Esophagus squamous epithelium (tissue), 5 donors: ENCODE measurements at regions of chr13 and their contacts with region 1.

Region 1: DNA sequence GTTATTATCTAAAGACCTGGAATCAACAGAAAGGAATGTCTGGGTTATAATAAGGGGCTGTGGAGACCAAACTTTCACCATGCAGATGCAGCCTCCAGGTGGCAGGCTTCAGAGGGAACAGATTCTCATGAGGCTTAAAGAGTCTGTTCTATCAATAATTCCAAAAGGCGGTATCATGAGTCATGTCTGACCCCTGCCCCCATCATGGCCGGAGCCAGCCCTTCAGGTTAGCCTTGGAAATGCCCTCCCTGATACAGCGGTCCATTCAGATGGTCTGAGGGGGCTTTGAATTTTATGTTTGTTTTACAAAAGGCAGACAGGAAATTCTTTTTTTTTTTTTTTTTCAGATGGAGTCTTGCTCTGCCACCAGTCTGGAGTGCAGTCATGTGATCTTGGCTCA is 21.7 kb upstream of the LAMP1 start:
- DNase-seq: no peak
- H3K4me3 ChIP-seq: no peak overlapping the region
- H3K27ac ChIP-seq: no peak overlapping the region
- H3K4me1 ChIP-seq: peaks cover 0 to 21% (median 3%) of the 10 kb centered on the region in 3 donors
- H3K27me3 ChIP-seq: no peaks in the 10 kb centered on the region
- CTCF ChIP-seq: peak in 5 of 6 experiments; percentile 31 to 58 (median 53)
- POLR2A ChIP-seq: no peak

Region 2: DNA sequence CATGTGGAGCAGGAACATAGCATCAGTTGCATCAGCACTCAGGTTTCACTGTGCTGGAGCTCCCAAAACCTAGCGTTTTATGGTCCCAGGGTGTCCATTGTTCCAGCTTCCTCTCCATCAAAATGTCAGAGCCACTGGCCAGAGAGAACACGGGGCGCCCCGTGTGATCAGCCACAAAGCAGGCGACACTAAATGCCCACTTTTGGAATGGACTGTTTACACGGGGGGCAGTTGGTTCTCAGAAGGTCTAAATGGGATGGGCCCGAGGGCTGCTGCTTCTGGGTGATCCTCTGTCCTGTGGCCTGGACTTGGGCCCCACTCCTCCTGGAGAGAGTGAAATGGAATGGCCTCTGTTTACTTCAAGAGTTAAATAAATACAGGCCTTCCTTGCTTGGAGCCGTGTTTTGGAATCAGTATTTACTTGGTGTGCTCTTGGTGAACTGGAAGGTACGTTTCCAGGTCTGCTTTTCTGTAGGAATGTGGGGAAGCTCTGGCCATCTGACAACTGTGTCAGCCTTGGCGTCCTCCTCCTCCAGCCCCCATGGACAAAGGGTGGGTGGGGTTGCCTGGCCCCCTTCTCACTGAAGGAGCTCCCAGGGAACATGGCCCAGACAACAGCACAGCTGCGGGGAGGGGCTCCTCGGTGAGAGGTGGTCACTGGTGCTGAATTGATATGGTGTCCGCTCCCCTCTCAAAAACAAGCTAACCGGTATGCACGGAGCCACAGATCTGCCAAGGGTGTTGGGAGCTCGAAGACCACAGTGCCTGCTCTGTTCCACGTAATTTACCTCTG is 322.4 kb before region 1 on chr13:
- intact Hi-C with region 1: no loop called
- DNase-seq: no peak
- H3K4me3 ChIP-seq: no peak overlapping the region
- H3K27ac ChIP-seq: no peak overlapping the region
- H3K4me1 ChIP-seq: no peaks in the 10 kb centered on the region
- H3K27me3 ChIP-seq: peaks cover 0 to 39% (median 0%) of the 10 kb centered on the region in 4 donors
- CTCF ChIP-seq: no peak
- POLR2A ChIP-seq: no peak

Region 3: DNA sequence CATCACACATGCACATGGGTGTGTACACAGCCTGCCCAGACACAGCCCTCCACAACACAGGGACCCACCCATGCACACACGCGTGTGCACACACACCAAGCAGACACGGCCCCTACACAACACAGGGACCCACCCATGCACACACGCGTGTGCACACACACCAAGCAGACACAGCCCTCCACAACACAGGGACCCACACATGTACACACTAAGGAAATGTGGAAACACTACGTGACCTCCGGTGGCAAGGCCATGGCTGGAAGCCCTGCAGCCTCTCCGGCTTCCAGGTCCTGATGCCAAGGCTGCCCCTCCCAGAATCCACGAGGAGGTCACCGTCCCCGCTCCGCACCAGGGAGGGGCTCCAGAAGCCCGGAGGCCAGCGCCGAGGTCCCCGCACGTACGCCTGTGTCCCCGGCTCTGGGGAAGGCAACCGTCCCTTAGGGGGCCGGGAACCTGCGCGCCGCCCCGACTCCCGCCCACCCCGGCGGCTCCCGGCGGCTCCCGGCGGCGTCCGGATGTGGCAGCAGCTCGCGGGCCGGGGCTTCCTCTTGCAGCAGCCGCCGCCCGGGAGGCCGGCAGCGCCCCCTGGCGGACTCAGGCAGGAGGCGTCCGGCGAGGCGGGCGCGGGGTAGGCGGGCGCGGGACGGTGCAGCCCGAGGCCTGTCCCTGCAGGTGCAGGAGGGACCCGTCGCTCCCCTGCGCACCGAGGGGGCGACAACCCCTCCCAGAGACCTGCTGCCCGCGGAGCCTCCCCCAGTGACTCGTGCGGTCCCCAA is 118.4 kb after region 1 on chr13:
- intact Hi-C with region 1: loop called (anchors 10 kb)
- DNase-seq: peak; percentile 21
- H3K4me3 ChIP-seq: peak overlapping the region; percentile 47 to 90 (median 57)
- H3K27ac ChIP-seq: peak overlapping the region; percentile 36 to 68 (median 54)
- H3K4me1 ChIP-seq: peaks cover 4 to 17% (median 10%) of the 10 kb centered on the region in 3 donors
- H3K27me3 ChIP-seq: peaks cover 0 to 4% (median 0%) of the 10 kb centered on the region in 4 donors
- CTCF ChIP-seq: peak; percentile 74 to 97 (median 94)
- POLR2A ChIP-seq: no peak